Activated CD4-positive, alpha-beta memory T cell treated with anti-CD3 and anti-CD28 coated beads, Interleukin-2, amount 10 ng/mL, durations not matched to agents 7 days and 5 days (primary cell): ENCODE measurements at regions of chr1 and their contacts with region 1.

Region 1: GRCh38 chr1:31923901-31924535 is 14.2 kb downstream of the PTP4A2 start:
- DNase-seq: no peak
- H3K4me3 Mint-ChIP-seq: peak overlapping the region; percentile 45
- H3K27ac Mint-ChIP-seq: peak overlapping the region; percentile 76
- H3K4me1 Mint-ChIP-seq: peaks cover 77% of the 10 kb centered on the region
- H3K27me3 Mint-ChIP-seq: no peaks in the 10 kb centered on the region

Region 2: GRCh38 chr1:31855038-31855845 is 68.8 kb before region 1 on chr1:
- CTCF ChIA-PET with region 1: no interaction called
- POLR2A ChIA-PET with region 1: no interaction called
- DNase-seq: no peak
- H3K4me3 Mint-ChIP-seq: no peak overlapping the region
- H3K27ac Mint-ChIP-seq: no peak overlapping the region
- H3K4me1 Mint-ChIP-seq: no peaks in the 10 kb centered on the region
- H3K27me3 Mint-ChIP-seq: peaks cover 4% of the 10 kb centered on the region

Region 3: DNA sequence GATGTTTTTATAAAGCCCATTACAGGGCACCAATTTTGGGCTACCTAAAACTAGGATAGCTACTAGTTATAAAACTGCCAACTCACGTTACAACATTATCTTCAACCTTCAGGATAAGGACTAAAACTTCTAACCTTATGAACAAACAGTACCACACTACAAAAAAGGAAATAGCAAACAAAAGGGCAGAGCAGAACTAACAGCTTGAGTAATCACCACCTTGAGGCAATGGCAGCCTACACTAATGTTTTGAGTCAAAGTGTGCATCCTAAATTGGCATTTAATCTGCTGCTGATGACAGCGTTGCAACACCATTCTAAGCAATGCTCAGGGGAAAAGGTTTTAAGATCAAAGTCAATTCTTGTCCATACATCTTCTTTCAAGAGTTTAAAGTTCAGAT is 13.1 kb before region 1 on chr1:
- CTCF ChIA-PET with region 1: interaction called, 5 read pairs
- POLR2A ChIA-PET with region 1: interaction called, 55 read pairs
- DNase-seq: no peak
- H3K4me3 Mint-ChIP-seq: no peak overlapping the region
- H3K27ac Mint-ChIP-seq: peak overlapping the region; percentile 61
- H3K4me1 Mint-ChIP-seq: peaks cover 51% of the 10 kb centered on the region
- H3K27me3 Mint-ChIP-seq: no peaks in the 10 kb centered on the region

Region 4: DNA sequence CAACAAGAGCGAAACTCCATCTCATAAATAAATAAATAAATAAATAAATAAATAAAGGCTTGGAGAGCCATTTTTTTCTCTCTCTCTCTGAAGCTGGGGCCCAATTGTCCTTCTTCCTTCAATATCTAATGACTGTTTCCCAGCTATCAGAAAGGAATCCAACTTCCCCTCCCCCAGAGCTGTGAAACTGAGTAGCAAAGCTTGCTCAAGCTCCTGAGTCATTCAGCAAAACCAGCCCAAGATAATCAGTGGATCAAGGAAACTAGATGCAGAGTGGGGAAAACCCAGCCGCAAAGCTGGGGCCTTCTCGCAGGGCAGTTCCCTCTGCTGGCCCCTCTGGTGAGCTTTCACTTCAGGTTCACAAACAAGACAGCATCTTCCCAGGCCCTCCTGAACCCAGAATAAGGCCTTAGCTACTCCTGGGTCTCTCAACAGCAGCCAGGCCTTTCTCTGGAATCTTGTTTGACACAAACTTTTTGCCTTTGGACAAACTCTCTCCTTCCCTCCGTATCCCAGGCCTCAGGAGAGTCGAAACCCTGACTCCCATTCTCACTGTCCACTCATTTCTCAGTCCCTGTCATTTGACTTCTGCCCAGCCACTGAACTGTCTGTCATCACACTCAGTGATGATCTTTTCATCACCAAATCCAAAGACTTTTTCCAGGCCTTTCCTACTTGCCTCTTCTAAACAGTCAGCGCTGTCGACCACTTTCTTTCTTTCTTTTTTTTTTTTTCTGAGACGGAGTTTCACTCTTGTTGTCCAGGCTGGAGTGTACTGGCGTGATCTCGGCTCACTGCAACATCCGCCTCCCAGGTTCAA is 32.1 kb after region 1 on chr1:
- CTCF ChIA-PET with region 1: interaction called, 6 read pairs
- POLR2A ChIA-PET with region 1: interaction called, 12 read pairs
- DNase-seq: peak; percentile 87
- H3K4me3 Mint-ChIP-seq: peak overlapping the region; percentile 19
- H3K27ac Mint-ChIP-seq: peak overlapping the region; percentile 69
- H3K4me1 Mint-ChIP-seq: peaks cover 85% of the 10 kb centered on the region
- H3K27me3 Mint-ChIP-seq: no peaks in the 10 kb centered on the region